Right cardiac atrium (tissue), 5 donors: ENCODE measurements at regions of chr2 and their contacts with region 1.

Region 1: DNA sequence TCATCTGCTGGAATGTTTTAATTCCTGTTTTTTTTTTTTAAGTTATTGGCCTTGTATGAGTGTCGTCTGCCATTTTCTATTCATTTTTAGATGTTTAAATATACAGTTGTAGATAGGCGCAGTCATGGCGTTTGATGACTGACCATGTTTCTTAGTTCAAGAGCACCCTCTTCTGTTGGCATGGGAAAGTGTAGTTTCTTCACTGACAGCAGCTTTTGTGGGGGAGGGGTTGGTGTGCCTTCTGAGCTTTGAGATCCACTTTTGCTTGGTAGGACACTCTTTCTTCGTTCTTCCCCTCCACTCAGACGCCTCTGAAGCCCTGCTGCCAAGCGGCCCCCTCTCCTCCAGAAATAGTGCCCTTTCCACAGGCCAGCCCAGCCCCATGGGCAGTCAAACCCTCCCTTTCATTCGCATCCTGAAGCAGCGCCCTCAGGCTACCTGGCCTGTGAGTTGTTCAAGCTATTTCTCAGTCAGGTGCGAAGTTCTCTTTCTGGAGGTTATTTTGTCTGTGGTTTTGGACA is 492.0 kb downstream of the TNS1 start:
- DNase-seq: peak; percentile 47 to 70 (median 62)
- ATAC-seq: peak; percentile 85 to 92
- H3K4me3 ChIP-seq: no peak overlapping the region
- H3K27ac ChIP-seq: no peak overlapping the region
- H3K4me1 ChIP-seq: peaks cover 7% of the 10 kb centered on the region
- H3K27me3 ChIP-seq: no peaks in the 10 kb centered on the region

Region 2: DNA sequence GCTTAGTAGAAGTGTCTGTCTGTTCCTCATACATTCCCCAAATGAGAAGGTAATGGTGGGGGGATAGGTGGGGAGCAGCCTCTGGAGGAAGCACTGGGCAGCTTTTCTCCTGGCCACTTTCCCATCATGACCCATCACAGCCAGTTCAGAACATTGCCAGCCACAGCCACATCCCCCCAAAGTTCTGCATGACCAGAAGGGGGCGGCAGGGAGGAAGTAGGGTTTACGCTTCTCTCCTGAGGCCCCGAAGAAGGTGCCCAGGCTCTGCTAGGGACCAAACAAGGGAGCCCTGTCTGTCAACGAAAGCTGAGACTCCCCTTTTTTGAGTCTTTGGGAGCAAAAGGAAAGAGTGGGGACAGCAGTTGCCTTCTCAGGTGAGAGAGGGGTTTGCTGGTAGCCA is 823.2 kb before region 1 on chr2:
- intact Hi-C with region 1: loop called in 3 of 4 experiments (anchors 5 kb)
- DNase-seq: no peak
- ATAC-seq: no peak
- H3K4me3 ChIP-seq: no peak overlapping the region
- H3K27ac ChIP-seq: no peak overlapping the region
- H3K4me1 ChIP-seq: peaks cover 14% of the 10 kb centered on the region
- H3K27me3 ChIP-seq: no peaks in the 10 kb centered on the region

Region 3: DNA sequence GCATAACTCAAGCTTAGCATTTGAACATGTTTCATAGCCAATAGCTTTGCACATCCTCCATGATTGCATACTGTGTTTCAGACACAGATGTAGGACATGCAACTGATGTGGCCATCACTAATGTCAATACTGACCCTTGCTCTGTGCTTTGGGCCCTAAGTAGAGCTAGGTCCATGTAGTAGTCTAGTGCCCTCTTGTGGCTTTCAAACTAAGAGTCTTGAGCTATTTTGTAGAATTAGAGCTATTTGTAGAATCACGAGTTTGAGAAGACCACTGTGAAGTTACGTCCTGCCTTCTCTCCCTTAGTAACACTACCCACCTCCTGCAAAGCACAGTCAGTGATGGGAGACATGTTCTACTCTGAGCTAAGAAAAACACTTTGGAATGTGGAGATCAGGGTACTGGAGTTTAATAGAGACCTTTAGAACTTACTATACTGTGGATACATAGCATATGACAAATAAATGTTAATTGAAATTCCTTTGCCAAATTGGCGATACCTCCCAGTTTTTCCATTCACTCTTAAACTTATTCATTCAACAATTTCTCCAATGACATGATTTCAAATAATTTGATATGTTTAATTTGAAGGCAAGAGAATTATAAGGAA is 344.5 kb before region 1 on chr2:
- intact Hi-C with region 1: loop called in 2 of 4 experiments (anchors 10 kb)
- DNase-seq: no peak
- ATAC-seq: peak; percentile 72 to 79
- H3K4me3 ChIP-seq: no peak overlapping the region
- H3K27ac ChIP-seq: no peak overlapping the region
- H3K4me1 ChIP-seq: peaks cover 1% of the 10 kb centered on the region
- H3K27me3 ChIP-seq: no peaks in the 10 kb centered on the region

Region 4: DNA sequence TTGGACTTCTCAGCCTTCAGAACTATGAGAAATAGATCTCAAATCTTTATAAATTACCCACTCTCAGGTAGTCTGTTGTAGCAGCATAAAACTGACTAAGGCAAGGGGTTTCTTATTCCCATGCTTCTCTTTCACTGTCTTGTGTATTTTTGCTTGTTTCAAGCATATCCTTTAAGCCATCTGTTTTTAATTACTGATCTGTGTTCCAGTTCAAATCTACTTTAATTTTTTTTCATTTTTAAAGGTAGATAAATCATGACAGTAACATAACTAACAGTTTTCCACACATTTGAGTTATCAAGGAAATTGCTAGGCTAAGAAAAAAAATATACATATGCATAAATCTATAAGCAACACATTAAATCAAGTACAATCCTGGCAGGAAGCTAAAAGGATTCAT is 333.1 kb before region 1 on chr2:
- intact Hi-C with region 1: loop called in 1 of 4 experiments (anchors 10 kb)
- DNase-seq: no peak
- ATAC-seq: no peak
- H3K4me3 ChIP-seq: no peak overlapping the region
- H3K27ac ChIP-seq: no peak overlapping the region
- H3K4me1 ChIP-seq: no peaks in the 10 kb centered on the region
- H3K27me3 ChIP-seq: no peaks in the 10 kb centered on the region